Dendritic cell treated with granulocyte-macrophage colony-stimulating factor and Interleukin-4, amounts not matched to agents 40 ng/mL and 50 ng/mL, for 4 days (primary cell): ENCODE measurements at regions of chr17 and their contacts with region 1.

Region 1: DNA sequence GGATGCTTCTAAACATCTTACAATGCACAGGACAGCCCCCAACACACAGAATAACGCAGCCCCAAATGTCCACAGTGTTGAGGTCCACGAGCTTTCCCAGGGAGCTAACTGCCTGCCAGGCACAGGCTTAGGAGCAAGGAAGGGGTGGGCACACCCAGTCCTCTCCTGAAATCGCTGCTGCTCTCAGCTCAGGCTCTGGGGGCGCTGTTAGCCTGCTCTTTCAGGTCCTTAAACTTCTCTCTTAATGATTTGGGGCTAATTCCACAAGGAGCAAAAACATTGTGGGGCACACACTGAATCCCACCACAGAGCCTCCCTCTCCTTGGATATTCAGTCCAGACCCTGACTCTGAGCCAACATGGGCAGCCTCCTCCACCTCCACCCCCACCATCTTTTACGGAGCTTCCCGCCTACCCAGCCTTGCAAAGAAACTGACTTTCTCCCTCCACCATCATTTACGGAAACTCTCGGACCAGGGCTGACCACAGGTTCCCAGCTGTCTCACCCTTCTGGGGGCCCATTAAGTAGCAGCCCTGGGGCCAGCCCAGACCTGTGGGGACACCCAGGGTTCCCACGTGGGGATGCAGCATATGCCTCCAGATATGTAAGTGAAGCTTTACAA is 1.1 kb downstream of the CD300H start:
- H3K4me3 Mint-ChIP-seq: peak overlapping the region; percentile 81
- H3K27ac Mint-ChIP-seq: peak overlapping the region; percentile 16
- H3K4me1 Mint-ChIP-seq: peaks cover 86% of the 10 kb centered on the region
- H3K27me3 Mint-ChIP-seq: peaks cover 30% of the 10 kb centered on the region

Region 2: GRCh38 chr17:74340470-74341023 is 225.7 kb before region 1 on chr17:
- intact Hi-C with region 1: no loop called
- H3K4me3 Mint-ChIP-seq: no peak overlapping the region
- H3K27ac Mint-ChIP-seq: no peak overlapping the region
- H3K4me1 Mint-ChIP-seq: no peaks in the 10 kb centered on the region
- H3K27me3 Mint-ChIP-seq: peaks cover 36% of the 10 kb centered on the region

Region 3: GRCh38 chr17:74545843-74546230 is 20.4 kb before region 1 on chr17 and contains the start of gene CD300C:
- intact Hi-C with region 1: loop called (anchors 1 kb)
- H3K4me3 Mint-ChIP-seq: peak within 1 kb of the TSS; percentile 69
- H3K27ac Mint-ChIP-seq: peak within 1 kb of the TSS; percentile 93
- H3K4me1 Mint-ChIP-seq: peaks cover 82% of the 10 kb centered on the region
- H3K27me3 Mint-ChIP-seq: peaks cover 13% of the 10 kb centered on the region

Region 4: GRCh38 chr17:74554909-74555308 is 11.3 kb before region 1 on chr17:
- intact Hi-C with region 1: loop called (anchors 2 kb)
- H3K4me3 Mint-ChIP-seq: no peak overlapping the region
- H3K27ac Mint-ChIP-seq: peak overlapping the region; percentile 26
- H3K4me1 Mint-ChIP-seq: peaks cover 91% of the 10 kb centered on the region
- H3K27me3 Mint-ChIP-seq: peaks cover 20% of the 10 kb centered on the region

Region 5: DNA sequence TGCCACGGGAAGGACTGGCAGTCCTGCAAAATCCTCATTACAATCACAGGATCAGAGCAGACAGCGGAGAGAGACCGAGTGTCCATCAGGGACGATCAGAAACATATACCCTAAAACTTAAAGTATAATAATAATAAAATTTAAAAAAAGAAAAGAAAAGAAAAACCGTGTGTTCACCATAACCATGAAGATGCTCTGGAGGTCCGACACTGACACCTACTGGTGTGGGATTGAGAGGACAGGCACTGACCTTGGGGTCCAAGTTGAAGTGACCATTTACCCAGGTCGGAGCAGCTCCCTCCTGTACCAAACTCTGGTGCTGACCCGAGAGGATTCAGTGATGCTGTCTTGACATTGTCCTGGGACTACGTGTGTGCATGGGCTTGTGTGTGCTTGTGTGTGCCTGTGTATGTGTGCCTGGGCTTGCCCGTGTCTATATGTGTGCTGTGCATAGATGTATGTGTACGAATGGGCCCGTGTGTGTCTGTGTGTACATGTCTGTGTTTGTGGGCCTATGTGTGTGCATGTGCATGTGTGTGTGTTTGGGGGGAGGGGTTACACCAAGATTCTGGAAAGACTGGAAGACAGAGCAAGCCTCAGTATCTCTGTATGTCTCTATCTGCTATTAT is 35.8 kb after region 1 on chr17:
- intact Hi-C with region 1: loop called (anchors 1 kb)
- H3K4me3 Mint-ChIP-seq: no peak overlapping the region
- H3K27ac Mint-ChIP-seq: peak overlapping the region; percentile 64
- H3K4me1 Mint-ChIP-seq: peaks cover 94% of the 10 kb centered on the region
- H3K27me3 Mint-ChIP-seq: peaks cover 20% of the 10 kb centered on the region

Region 6: DNA sequence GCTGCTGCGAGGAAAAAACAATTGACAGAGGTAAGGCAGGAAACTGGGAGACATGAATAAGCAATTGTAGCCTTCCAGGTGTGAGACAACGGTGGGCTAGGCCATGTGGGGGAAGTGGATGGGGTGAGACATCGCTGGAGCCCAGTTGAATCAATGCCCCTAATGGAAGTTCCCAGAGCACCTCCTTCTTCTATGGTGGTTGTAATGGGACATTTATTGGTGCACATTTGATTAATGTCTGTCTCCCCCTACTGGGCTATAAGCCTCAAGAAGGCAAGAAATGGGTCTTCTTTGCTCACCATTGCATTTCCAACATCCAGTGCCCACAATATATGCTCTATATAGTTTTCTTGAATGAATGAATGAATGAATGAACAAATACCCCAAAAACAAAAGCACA is 80.0 kb after region 1 on chr17:
- intact Hi-C with region 1: loop called (anchors 1 kb)
- H3K4me3 Mint-ChIP-seq: no peak overlapping the region
- H3K27ac Mint-ChIP-seq: no peak overlapping the region
- H3K4me1 Mint-ChIP-seq: peaks cover 52% of the 10 kb centered on the region
- H3K27me3 Mint-ChIP-seq: peaks cover 69% of the 10 kb centered on the region